ENCODE measurements at regions of chr7 and their contacts with region 1.

Region 1: DNA sequence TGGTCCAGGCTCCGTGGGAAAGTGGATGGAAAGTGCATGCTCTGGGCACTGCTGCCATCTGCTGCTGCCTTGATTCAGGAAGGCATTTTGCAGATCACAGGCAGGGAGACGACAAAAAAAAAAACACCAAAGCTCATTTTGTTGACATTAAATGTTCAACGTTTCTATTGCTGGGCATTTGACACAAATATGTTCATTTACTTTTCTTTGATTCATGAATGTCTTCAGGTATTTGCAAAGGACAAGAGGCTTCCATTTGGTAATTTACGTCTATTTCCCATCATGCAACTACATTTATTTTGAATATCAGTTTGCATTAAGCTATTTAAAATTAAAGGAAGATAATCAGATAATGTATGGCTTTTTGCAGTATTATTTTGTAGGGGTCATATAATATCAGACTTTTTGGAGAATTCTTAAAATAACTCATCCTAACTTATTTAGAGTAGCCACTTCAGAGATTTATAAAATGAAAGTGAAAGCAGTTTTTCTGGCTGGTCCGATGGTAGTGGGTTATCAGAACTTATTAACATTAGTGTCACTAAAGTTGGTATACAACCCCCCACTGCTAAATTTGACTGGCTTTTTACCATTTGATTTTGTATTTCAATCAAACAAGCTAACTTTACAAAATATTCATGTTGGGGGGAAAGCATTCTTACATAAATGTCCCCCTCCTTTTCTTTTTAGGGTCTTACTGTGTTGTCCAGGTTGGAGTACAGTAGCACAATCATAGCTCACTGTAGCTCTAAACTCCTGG is 65.3 kb downstream of the PDIA4 start:
- DNase-seq: peak in 4 of 6 donors; percentile 49 to 67 (median 56)
- ATAC-seq: peak; percentile 75 to 89 (median 82)
- H3K4me3 ChIP-seq: peak overlapping the region; percentile 27 to 50 (median 39)
- H3K27ac ChIP-seq: peak overlapping the region; percentile 28 to 76 (median 54)
- H3K4me1 ChIP-seq: peaks cover 0 to 7% (median 0%) of the 10 kb centered on the region in 3 donors
- H3K27me3 ChIP-seq: no peaks in the 10 kb centered on the region
- CTCF ChIP-seq: peak in 3 of 4 donors; percentile 28 to 34 (median 31)

Region 2: DNA sequence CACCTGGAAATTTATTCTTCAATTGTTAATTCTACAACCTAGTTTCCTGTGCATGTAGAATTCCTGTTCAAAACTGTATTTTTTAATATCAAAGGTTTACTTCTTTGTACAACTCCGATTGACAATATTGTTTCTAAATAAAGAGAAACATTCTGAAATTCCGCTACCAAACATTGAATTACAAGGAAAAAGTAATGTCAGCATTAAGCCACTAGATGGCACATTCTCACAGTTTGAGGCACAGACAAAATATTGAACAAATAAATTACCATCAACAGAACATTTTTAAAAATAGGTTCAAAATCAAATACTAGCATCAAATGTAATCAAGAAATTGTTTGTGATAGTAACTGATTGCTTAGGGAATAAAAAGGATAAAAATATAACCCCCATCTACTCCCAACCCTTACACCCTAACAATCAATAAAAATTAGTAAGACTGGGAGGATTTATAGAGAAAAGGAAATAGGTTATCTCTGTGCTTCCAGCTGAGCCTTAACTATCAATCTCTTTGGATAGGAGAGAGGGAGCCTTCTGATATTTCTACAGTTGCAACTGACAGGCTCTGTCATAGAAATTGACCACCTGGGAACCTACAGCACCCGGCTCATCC is 459.0 kb before region 1 on chr7:
- intact Hi-C with region 1: loop called in 1 of 3 experiments (anchors 10 kb)
- DNase-seq: no peak
- ATAC-seq: peak in 3 of 4 donors; percentile 49 to 53 (median 50)
- H3K4me3 ChIP-seq: no peak overlapping the region
- H3K27ac ChIP-seq: no peak overlapping the region
- H3K4me1 ChIP-seq: no peaks in the 10 kb centered on the region
- H3K27me3 ChIP-seq: peaks cover 0 to 9% (median 0%) of the 10 kb centered on the region in 4 donors
- CTCF ChIP-seq: peak; percentile 33 to 73 (median 50)

Region 3: GRCh38 chr7:148575640-148576411 is 387.2 kb before region 1 on chr7:
- intact Hi-C with region 1: loop called in 2 of 3 experiments (anchors 5 kb)
- DNase-seq: peak; percentile 21 to 84 (median 60)
- ATAC-seq: peak; percentile 69 to 95 (median 92)
- H3K4me3 ChIP-seq: no peak overlapping the region
- H3K27ac ChIP-seq: no peak overlapping the region
- H3K4me1 ChIP-seq: no peaks in the 10 kb centered on the region
- H3K27me3 ChIP-seq: no peaks in the 10 kb centered on the region
- CTCF ChIP-seq: peak; percentile 63 to 86 (median 75)

Region 4: GRCh38 chr7:148856891-148857290 is 106.1 kb before region 1 on chr7:
- intact Hi-C with region 1: loop called in 1 of 3 experiments (anchors 10 kb)
- DNase-seq: no peak
- ATAC-seq: no peak
- H3K4me3 ChIP-seq: no peak overlapping the region
- H3K27ac ChIP-seq: no peak overlapping the region
- H3K4me1 ChIP-seq: no peaks in the 10 kb centered on the region
- H3K27me3 ChIP-seq: no peaks in the 10 kb centered on the region
- CTCF ChIP-seq: no peak

Measured in pancreas (tissue), 10 donors.